ENCODE measurements at regions of chr12 and their contacts with region 1.

Region 1: GRCh38 chr12:2057041-2057794 is 4.4 kb downstream of the CACNA1C start:
- DNase-seq: peak; percentile 66 to 81
- H3K4me3 ChIP-seq: peak overlapping the region; percentile 70 to 95
- H3K27ac ChIP-seq: peak overlapping the region; percentile 91 to 96
- H3K4me1 ChIP-seq: peaks cover 0 to 72% (median 44%) of the 10 kb centered on the region in 4 donors
- H3K27me3 ChIP-seq: no peaks in the 10 kb centered on the region
- CTCF ChIP-seq: peak; percentile 73 to 81

Region 2: DNA sequence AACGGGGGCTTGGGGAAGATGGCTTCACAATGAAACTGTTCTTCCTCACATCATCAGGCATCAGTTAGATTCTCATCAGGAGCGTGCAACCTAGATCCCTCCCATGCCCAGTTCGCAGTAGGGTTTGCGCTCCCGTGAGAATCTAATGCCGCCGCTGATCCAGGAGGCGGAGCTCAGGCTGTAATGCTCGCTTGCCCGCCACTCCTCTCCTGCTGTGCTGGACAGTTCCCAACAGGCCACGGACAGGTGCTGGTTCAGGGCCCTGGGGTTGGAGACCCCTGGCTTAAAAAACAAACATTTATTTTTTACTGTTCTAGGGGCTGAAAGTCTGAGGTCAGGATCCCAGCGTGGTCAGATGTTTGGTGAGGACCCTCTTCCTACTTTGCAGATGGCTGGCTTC is 643.3 kb before region 1 on chr12:
- intact Hi-C with region 1: no loop called
- DNase-seq: no peak
- H3K4me3 ChIP-seq: no peak overlapping the region
- H3K27ac ChIP-seq: no peak overlapping the region
- H3K4me1 ChIP-seq: no peaks in the 10 kb centered on the region
- H3K27me3 ChIP-seq: no peaks in the 10 kb centered on the region
- CTCF ChIP-seq: no peak

Region 3: DNA sequence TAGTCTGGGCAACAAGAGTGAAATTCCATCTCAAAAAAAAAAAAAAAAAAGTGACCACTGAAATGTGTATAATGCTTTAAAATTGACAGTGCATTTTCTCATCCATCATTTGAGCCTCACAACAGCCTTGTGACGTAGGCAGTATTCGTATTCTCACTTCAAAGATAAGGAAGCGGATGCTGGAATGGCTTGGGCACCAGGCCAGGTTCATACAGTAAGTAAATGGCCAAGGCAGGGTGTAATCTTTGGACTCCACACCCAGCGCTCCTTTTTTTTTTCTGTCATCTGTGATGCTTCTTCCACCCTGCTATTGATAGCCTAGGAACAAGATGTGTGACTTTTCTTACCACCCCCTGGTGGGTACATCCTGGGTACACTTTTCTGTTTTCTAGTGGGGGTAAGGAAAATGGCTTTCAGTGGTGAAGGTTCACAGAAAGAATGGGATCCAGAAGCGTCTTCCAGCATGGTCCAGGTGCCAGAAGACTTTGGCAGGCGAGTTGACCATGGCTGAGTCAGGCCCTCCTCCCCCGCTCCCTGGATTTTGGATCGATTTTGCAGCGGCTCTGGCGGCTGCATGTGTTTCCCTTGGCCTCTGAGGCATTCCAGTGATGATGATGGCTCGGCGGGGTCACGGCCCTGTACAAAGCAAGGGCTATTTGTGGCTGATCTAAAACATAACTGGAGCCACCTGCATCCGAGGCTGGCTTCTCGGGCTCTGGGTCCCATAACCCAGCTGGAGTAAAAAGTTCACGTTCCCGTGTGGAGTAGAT is 106.1 kb after region 1 on chr12:
- intact Hi-C with region 1: loop called (anchors 10 kb)
- DNase-seq: peak; percentile 91 to 97
- H3K4me3 ChIP-seq: peak overlapping the region in 1 of 2 donors; percentile 4
- H3K27ac ChIP-seq: peak overlapping the region; percentile 84 to 85
- H3K4me1 ChIP-seq: peaks cover 5 to 69% (median 53%) of the 10 kb centered on the region in 4 donors
- H3K27me3 ChIP-seq: no peaks in the 10 kb centered on the region
- CTCF ChIP-seq: no peak

Region 4: DNA sequence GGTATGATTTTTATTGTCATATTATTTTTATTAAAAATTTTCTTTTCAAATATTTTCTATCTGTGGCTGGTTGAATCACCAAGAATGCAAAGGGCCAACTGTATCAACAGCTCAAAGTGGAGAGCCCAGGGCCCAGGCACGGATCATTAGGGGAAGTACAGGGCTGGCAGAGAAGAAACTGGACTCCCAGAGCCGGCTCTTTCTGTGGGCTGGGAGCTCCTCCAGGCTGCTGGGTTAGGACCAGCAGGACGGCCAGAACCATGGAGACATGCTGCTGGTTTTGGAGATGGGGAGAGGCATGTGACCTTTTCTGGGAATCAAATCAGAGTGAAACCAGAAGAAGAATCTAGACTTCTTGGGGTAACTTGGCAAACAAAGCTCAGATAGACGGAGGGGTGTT is 216.1 kb after region 1 on chr12:
- intact Hi-C with region 1: loop called (anchors 5 kb)
- DNase-seq: peak; percentile 72 to 90
- H3K4me3 ChIP-seq: no peak overlapping the region
- H3K27ac ChIP-seq: peak overlapping the region; percentile 66 to 69
- H3K4me1 ChIP-seq: peaks cover 0 to 53% (median 18%) of the 10 kb centered on the region in 4 donors
- H3K27me3 ChIP-seq: no peaks in the 10 kb centered on the region
- CTCF ChIP-seq: peak; percentile 46 to 61

Region 5: GRCh38 chr12:2284857-2285256 is 227.6 kb after region 1 on chr12:
- intact Hi-C with region 1: loop called (anchors 5 kb)
- DNase-seq: peak; percentile 72 to 89
- H3K4me3 ChIP-seq: no peak overlapping the region
- H3K27ac ChIP-seq: peak overlapping the region; percentile 81 to 83
- H3K4me1 ChIP-seq: peaks cover 0 to 81% (median 58%) of the 10 kb centered on the region in 4 donors
- H3K27me3 ChIP-seq: no peaks in the 10 kb centered on the region
- CTCF ChIP-seq: peak; percentile 61 to 64

Region 6: DNA sequence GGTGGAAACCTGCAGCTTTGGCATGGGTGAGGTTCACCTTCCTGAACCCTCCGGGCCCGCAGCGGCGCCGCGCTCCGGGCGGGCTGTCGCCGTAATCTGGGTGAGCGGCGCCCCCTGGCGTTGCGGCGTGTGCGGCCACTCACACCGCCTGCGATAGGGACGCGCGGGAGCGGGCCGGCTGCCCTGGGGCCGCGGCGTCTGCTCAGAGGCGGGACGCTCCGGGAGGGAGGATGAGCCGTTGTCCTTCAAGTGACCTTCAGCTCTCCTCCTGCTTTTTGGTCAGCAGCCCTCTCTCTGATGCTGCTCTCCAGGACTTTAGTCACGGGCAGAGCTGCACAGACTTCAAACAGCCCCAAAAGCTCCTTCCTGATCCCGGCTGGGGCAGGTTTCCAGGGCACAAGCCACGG is 525.9 kb after region 1 on chr12:
- intact Hi-C with region 1: loop called (anchors 5 kb)
- DNase-seq: peak; percentile 42 to 76
- H3K4me3 ChIP-seq: peak overlapping the region; percentile 7 to 23
- H3K27ac ChIP-seq: peak overlapping the region; percentile 35 to 53
- H3K4me1 ChIP-seq: peaks cover 0 to 13% (median 10%) of the 10 kb centered on the region in 4 donors
- H3K27me3 ChIP-seq: no peaks in the 10 kb centered on the region
- CTCF ChIP-seq: peak; percentile 90 to 92

Measured in tibial artery (tissue), 4 donors.